ENCODE measurements at regions of chr9 and their contacts with region 1.

Region 1: GRCh38 chr9:35096035-35096849 is at the start of gene PIGO:
- DNase-seq: peak; percentile 91
- H3K4me3 Mint-ChIP-seq: peak within 1 kb of the TSS; percentile 87
- H3K27ac Mint-ChIP-seq: peak within 1 kb of the TSS; percentile 92
- H3K4me1 Mint-ChIP-seq: peaks cover 53% of the 10 kb centered on the region
- H3K27me3 Mint-ChIP-seq: no peaks in the 10 kb centered on the region
- total RNA-seq, gene PIGO: 22.0 to 29.0 TPM

Region 2: DNA sequence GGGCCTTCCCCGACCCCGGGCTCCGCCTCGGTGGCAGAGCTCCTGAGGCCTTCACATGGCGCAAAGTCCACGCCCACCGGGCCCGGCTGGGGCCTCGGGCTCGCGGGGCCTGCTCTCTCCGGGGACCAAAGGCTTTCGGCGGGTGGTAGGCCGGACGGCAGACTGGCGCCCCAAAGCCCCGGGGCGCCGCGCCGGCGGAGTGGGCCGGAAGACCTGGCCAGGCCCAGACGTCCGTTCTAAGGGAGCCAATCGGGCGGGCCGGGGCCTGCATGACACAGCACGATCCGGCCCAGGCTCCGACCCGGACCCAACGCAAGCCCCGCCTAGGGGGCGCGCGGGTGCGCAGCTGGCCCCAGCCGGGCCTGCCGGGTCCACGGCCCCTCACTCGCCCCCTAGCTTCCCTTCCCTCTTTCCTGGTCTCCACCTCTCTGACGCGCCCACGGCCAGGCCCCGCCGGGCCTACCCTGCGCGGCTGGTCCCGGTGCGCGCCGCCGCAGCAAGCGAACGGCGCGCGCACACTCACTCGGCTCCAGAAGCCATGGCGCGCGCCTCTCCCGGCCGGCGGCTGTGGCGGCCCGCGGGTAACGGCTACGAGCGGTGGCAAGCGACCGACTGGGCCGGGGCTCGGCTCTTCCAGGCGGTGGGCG is 24.3 kb before region 1 on chr9:
- CTCF ChIA-PET with region 1: interaction called, 95 read pairs
- POLR2A ChIA-PET with region 1: no interaction called
- DNase-seq: peak; percentile 71
- H3K4me3 Mint-ChIP-seq: peak overlapping the region; percentile 94
- H3K27ac Mint-ChIP-seq: peak overlapping the region; percentile 87
- H3K4me1 Mint-ChIP-seq: peaks cover 61% of the 10 kb centered on the region
- H3K27me3 Mint-ChIP-seq: no peaks in the 10 kb centered on the region

Region 3: DNA sequence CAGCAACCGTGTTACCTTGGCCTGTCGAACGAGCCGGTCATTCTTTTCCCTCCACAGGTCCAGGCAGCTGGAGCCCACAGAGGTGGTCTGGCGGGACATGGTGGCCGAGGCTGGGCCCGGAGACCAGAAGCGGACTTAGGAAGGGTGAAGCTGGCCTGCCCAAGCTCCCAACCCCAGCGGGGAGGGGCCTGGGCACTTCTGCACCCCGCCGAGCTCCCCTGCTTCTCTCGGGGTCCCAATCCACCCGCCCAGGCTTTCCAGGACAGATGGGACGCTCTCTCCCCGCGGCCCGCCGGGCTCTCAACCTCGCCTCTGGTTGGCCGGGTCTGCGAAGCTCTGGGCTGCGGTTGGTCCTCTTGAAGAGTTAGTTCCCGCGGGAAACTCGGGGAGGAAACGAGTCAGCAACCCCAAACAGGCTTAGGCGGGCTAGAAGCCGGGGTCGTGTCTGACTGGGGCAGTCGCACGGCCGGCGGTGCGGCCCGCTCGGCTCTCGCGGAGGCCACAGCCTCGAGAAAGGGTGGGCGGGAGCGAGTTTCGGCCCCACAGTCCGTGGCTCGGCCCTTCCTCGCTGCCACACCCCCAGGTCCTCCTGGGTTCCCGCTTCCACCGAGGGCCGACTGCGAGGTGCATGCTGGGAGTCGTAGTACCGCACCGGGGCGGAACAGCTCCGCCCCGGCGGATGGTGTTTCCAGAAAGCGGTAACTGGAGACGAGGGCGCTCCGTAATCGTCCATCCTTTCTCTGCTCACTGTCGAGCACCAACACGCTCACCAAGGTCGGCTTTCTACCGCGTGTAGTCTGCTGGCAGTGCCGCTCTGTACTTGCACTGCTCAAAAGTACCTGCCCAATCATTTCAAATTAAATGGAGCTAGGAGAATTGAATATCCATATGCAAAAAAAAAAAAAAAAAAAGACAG is 16.6 kb before region 1 on chr9 and contains the start of gene FANCG:
- CTCF ChIA-PET with region 1: interaction called, 95 read pairs
- POLR2A ChIA-PET with region 1: no interaction called
- DNase-seq: peak; percentile 89
- H3K4me3 Mint-ChIP-seq: peak within 1 kb of the TSS; percentile 97
- H3K27ac Mint-ChIP-seq: peak within 1 kb of the TSS; percentile 99
- H3K4me1 Mint-ChIP-seq: peaks cover 40% of the 10 kb centered on the region
- H3K27me3 Mint-ChIP-seq: no peaks in the 10 kb centered on the region
- total RNA-seq, gene FANCG: 117 to 123 TPM

Region 4: DNA sequence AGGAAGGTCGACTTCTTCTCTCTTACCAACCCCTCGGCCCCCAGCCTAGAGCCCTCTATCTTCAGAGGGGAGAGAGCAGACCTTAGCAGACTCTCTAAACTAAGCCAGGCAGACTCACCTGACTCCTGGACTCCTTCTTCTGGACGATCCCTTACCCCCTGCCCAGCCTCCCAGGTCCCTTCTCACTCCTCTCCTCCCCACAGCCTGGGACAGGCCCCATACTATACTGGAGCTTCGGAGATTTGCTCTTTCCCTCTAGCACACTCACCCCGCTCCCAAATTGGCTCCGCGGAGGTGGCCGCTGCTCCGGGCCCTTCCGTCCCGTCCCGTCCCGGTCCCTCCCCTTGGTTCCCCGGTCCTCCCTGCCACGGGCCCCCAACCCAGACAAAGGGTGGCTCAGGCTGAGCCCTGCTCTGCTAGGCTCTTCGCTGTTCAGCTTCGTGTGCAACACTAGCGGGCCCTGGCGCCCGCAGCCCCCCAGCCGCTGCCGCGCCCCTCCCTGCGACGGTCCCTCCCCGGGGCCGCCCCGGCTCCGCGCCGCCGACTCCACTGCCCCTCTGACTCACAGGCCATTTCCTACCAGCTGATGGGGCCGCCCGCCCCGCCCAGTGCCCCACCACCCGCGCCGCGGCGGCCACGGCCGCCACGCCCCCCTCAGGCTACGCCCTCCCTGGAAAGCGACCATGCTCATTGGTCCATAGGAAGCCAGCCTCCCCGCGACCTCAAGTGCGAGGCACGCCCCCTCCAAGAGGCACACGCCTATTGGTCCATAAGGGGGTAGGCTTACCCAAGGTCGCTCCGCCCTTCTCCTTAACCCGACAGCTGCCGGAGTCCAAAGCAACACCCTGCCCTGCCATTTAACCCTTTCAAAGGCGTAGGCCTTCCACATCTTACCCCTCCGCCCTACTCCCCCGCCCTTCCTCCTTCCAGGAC is 15.0 kb after region 1 on chr9:
- CTCF ChIA-PET with region 1: interaction called, 16 read pairs
- POLR2A ChIA-PET with region 1: interaction called, 4 read pairs
- DNase-seq: peak; percentile 97
- H3K4me3 Mint-ChIP-seq: peak overlapping the region; percentile 73
- H3K27ac Mint-ChIP-seq: peak overlapping the region; percentile 77
- H3K4me1 Mint-ChIP-seq: peaks cover 56% of the 10 kb centered on the region
- H3K27me3 Mint-ChIP-seq: no peaks in the 10 kb centered on the region

Measured in activated CD4-positive, alpha-beta T cell treated with anti-CD3 and anti-CD28 coated beads, Interleukin-2, amount 10 ng/mL, durations not matched to agents 7 days and 5 days (primary cell).